Posterior vena cava (tissue), 2 donors: ENCODE measurements at regions of chr17 and their contacts with region 1.

Region 1: DNA sequence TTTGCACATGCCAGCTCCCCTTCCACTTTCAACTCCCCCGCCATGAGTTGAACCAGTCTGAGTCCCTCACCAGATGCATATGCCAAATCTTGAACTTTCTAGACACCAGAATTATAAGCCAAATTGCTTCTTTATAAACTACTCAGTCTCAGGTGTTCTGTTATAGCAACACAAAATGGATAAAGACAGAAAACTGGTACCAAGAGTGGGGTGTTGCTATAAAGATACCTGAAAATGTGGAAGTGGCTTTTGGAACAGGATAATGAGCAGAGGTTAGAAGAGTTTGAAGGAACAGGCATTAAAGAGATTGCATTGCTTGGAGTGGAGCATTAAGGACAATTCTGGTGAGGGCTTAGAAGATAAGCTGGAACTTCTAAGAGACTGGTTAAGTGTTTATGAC is 17.2 kb upstream of the CACNG5 start:
- DNase-seq: no peak

Region 2: GRCh38 chr17:66777689-66778225 is 40.0 kb before region 1 on chr17:
- intact Hi-C with region 1: no loop called
- DNase-seq: no peak

Region 3: GRCh38 chr17:66889480-66890230 is 71.9 kb after region 1 on chr17:
- intact Hi-C with region 1: loop called in 1 of 2 experiments (anchors 1 kb)
- DNase-seq: no peak